ENCODE measurements at regions of chr17 and their contacts with region 1.

Region 1: DNA sequence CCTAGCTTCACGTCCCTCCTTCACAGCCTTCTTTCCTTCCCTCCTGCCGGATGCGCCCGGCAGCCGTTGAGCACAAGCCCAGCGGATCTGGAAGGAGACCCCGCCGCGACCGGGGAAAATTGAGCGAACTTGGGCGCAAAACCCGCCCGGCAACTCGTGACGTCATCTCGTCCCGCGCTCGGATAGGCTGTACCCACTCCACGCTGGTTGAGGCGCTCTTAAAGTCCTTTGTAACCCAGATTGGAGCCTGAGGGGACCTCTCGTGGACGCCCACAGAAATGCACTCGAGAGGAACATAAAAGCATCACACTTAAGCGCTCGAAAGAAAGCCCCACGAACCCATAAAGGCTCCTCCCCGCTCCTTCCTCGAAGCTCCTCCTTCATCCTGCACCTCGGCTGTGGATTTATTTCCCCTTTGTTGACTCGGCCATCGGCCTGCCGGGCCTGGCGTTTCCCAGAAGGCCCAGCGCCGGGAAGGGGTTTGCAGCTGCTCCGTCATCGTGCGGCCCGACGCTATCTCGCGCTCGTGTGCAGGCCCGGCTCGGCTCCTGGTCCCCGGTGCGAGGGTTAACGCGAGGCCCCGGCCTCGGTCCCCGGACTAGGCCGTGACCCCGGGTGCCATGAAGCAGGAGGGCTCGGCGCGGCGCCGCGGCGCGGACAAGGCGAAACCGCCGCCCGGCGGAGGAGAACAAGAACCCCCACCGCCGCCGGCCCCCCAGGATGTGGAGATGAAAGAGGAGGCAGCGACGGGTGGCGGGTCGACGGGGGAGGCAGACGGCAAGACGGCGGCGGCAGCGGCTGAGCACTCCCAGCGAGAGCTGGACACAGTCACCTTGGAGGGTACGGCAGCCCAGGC is at the start of gene PSMD3:
- DNase-seq: peak; percentile 97 to 100
- ATAC-seq: peak; percentile 89 to 97 (median 91)
- H3K4me3 ChIP-seq: peak within 1 kb of the TSS; percentile 70
- H3K4me3 Mint-ChIP-seq: peak within 1 kb of the TSS; percentile 98
- H3K27ac ChIP-seq: peak within 1 kb of the TSS; percentile 91
- H3K27ac Mint-ChIP-seq: peak within 1 kb of the TSS; percentile 99
- H3K4me1 ChIP-seq: peaks cover 18% of the 10 kb centered on the region
- H3K4me1 Mint-ChIP-seq: peaks cover 27 to 29% of the 10 kb centered on the region in 2 donors
- H3K27me3 ChIP-seq: no peaks in the 10 kb centered on the region
- H3K27me3 Mint-ChIP-seq: no peaks in the 10 kb centered on the region
- CTCF ChIP-seq: peak; percentile 71
- total RNA-seq, gene PSMD3: 66.1 to 83.8 (median 78.9) TPM

Region 2: GRCh38 chr17:39927101-39927928 is 53.3 kb before region 1 on chr17 and contains the starts of genes LRRC3C and ORMDL3:
- intact Hi-C with region 1: loop called (anchors 1 kb)
- DNase-seq: peak; percentile 90 to 95
- ATAC-seq: peak; percentile 92 to 95 (median 93)
- H3K4me3 ChIP-seq: peak within 1 kb of the TSS; percentile 77
- H3K4me3 Mint-ChIP-seq: peak within 1 kb of the TSS; percentile 96
- H3K27ac ChIP-seq: peak within 1 kb of the TSS; percentile 70
- H3K27ac Mint-ChIP-seq: peak within 1 kb of the TSS; percentile 89 to 96
- H3K4me1 ChIP-seq: peaks cover 34% of the 10 kb centered on the region
- H3K4me1 Mint-ChIP-seq: peaks cover 36 to 46% of the 10 kb centered on the region in 2 donors
- H3K27me3 ChIP-seq: no peaks in the 10 kb centered on the region
- H3K27me3 Mint-ChIP-seq: no peaks in the 10 kb centered on the region
- CTCF ChIP-seq: no peak
- total RNA-seq, gene LRRC3C: not detected
- total RNA-seq, gene ORMDL3: 61.6 to 121 (median 77.2) TPM

Region 3: GRCh38 chr17:39963829-39964228 is 16.8 kb before region 1 on chr17:
- intact Hi-C with region 1: loop called (anchors 1 kb)
- DNase-seq: peak in 1 of 2 donors; percentile 50
- ATAC-seq: no peak
- H3K4me3 ChIP-seq: no peak overlapping the region
- H3K4me3 Mint-ChIP-seq: no peak overlapping the region
- H3K27ac ChIP-seq: no peak overlapping the region
- H3K27ac Mint-ChIP-seq: peak overlapping the region in 1 of 2 donors; percentile 66
- H3K4me1 ChIP-seq: peaks cover 51% of the 10 kb centered on the region
- H3K4me1 Mint-ChIP-seq: peaks cover 6 to 25% of the 10 kb centered on the region in 2 donors
- H3K27me3 ChIP-seq: no peaks in the 10 kb centered on the region
- H3K27me3 Mint-ChIP-seq: peaks cover 5 to 7% of the 10 kb centered on the region in 2 donors
- CTCF ChIP-seq: no peak

Measured in natural killer cell (primary cell).